ENCODE measurements at regions of chr3 and their contacts with region 1.

Region 1: GRCh38 chr3:119293871-119294695 is at the start of gene ARHGAP31:
- DNase-seq: peak; percentile 79
- H3K4me3 Mint-ChIP-seq: peak within 1 kb of the TSS; percentile 81
- H3K27ac Mint-ChIP-seq: peak within 1 kb of the TSS; percentile 86
- H3K4me1 Mint-ChIP-seq: peaks cover 51% of the 10 kb centered on the region
- H3K27me3 Mint-ChIP-seq: peaks cover 15% of the 10 kb centered on the region
- total RNA-seq, gene ARHGAP31: 13.2 and 14.0 TPM in 2 replicates

Region 2: DNA sequence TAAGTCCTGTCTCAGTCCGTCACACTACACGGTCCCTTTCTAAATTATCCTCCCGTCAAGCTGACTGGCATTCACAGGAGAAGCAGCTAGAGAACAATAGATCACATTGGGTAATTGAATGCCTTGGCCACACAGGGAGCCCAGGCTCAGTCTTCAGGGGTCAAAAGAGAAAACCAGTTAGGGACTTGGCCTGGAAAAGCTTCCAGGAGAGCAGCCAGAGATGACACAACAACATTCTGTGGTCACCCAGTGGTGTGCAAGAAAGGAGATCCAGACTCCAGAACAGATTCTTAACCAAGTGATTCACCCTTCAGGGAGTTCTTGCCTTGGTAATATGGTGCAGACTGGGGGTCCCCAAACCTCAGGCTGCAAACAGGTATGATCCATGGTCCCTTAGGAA is 16.0 kb after region 1 on chr3:
- intact Hi-C with region 1: loop called (anchors 2 kb)
- DNase-seq: no peak
- H3K4me3 Mint-ChIP-seq: no peak overlapping the region
- H3K27ac Mint-ChIP-seq: no peak overlapping the region
- H3K4me1 Mint-ChIP-seq: peaks cover 14% of the 10 kb centered on the region
- H3K27me3 Mint-ChIP-seq: peaks cover 6% of the 10 kb centered on the region

Region 3: GRCh38 chr3:119352849-119353502 is 58.9 kb after region 1 on chr3:
- intact Hi-C with region 1: loop called (anchors 2 kb)
- DNase-seq: no peak
- H3K4me3 Mint-ChIP-seq: no peak overlapping the region
- H3K27ac Mint-ChIP-seq: no peak overlapping the region
- H3K4me1 Mint-ChIP-seq: peaks cover 19% of the 10 kb centered on the region
- H3K27me3 Mint-ChIP-seq: peaks cover 6% of the 10 kb centered on the region

Region 4: GRCh38 chr3:119463171-119464169 is 169.4 kb after region 1 on chr3 and contains the start of gene TMEM39A:
- intact Hi-C with region 1: loop called (anchors 1 kb)
- DNase-seq: peak; percentile 98
- H3K4me3 Mint-ChIP-seq: peak within 1 kb of the TSS; percentile 95
- H3K27ac Mint-ChIP-seq: peak within 1 kb of the TSS; percentile 97
- H3K4me1 Mint-ChIP-seq: peaks cover 38% of the 10 kb centered on the region
- H3K27me3 Mint-ChIP-seq: no peaks in the 10 kb centered on the region
- total RNA-seq, gene TMEM39A: 50.4 and 58.4 TPM in 2 replicates

Region 5: GRCh38 chr3:119559441-119559963 is 265.4 kb after region 1 on chr3 and contains the start of gene CD80:
- intact Hi-C with region 1: loop called (anchors 10 kb)
- DNase-seq: peak; percentile 54
- H3K4me3 Mint-ChIP-seq: peak within 1 kb of the TSS; percentile 55
- H3K27ac Mint-ChIP-seq: peak within 1 kb of the TSS; percentile 67
- H3K4me1 Mint-ChIP-seq: peaks cover 45% of the 10 kb centered on the region
- H3K27me3 Mint-ChIP-seq: no peaks in the 10 kb centered on the region
- total RNA-seq, gene CD80: 6.8 TPM in 2 replicates

Measured in activated T-helper 2 cell treated with anti-CD3 and anti-CD28 coated beads, Interferon-gamma antibody, Interleukin-2, Interleukin-4, amounts not matched to agents 10 μg/mL and 5 μg/mL and 100 μg/mL, durations not matched to agents 14 hours and 24 hours and 36 hours (primary cell).